ENCODE measurements at regions of chr4 and their contacts with region 1.

Region 1: GRCh38 chr4:88659055-88659889 is 38.4 kb downstream of the NAP1L5 start:
- DNase-seq: peak; percentile 20
- ATAC-seq: no peak
- H3K4me3 ChIP-seq: no peak overlapping the region
- H3K4me3 Mint-ChIP-seq: no peak overlapping the region
- H3K27ac ChIP-seq: no peak overlapping the region
- H3K27ac Mint-ChIP-seq: no peak overlapping the region
- H3K4me1 ChIP-seq: no peaks in the 10 kb centered on the region
- H3K4me1 Mint-ChIP-seq: no peaks in the 10 kb centered on the region
- H3K27me3 ChIP-seq: no peaks in the 10 kb centered on the region
- H3K27me3 Mint-ChIP-seq: no peaks in the 10 kb centered on the region
- CTCF ChIP-seq: peak; percentile 56

Region 2: GRCh38 chr4:88533937-88534750 is 125.1 kb before region 1 on chr4:
- CTCF ChIA-PET with region 1: interaction called, 19 read pairs
- POLR2A ChIA-PET with region 1: no interaction called
- intact Hi-C with region 1: no loop called
- DNase-seq: no peak
- ATAC-seq: no peak
- H3K4me3 ChIP-seq: no peak overlapping the region
- H3K4me3 Mint-ChIP-seq: no peak overlapping the region
- H3K27ac ChIP-seq: no peak overlapping the region
- H3K27ac Mint-ChIP-seq: no peak overlapping the region
- H3K4me1 ChIP-seq: peaks cover 0 to under 1% of the 10 kb centered on the region in 2 donors
- H3K4me1 Mint-ChIP-seq: no peaks in the 10 kb centered on the region
- H3K27me3 ChIP-seq: no peaks in the 10 kb centered on the region
- H3K27me3 Mint-ChIP-seq: peaks cover 7% of the 10 kb centered on the region
- CTCF ChIP-seq: no peak

Region 3: GRCh38 chr4:88689877-88690276 is 30.6 kb after region 1 on chr4:
- CTCF ChIA-PET with region 1: no interaction called
- POLR2A ChIA-PET with region 1: no interaction called
- intact Hi-C with region 1: no loop called
- DNase-seq: no peak
- ATAC-seq: no peak
- H3K4me3 ChIP-seq: no peak overlapping the region
- H3K4me3 Mint-ChIP-seq: no peak overlapping the region
- H3K27ac ChIP-seq: no peak overlapping the region
- H3K27ac Mint-ChIP-seq: no peak overlapping the region
- H3K4me1 ChIP-seq: no peaks in the 10 kb centered on the region
- H3K4me1 Mint-ChIP-seq: no peaks in the 10 kb centered on the region
- H3K27me3 ChIP-seq: no peaks in the 10 kb centered on the region
- H3K27me3 Mint-ChIP-seq: no peaks in the 10 kb centered on the region
- CTCF ChIP-seq: no peak

Measured in B cell (primary cell).